Activated naive CD4-positive, alpha-beta T cell treated with anti-CD3 and anti-CD28 coated beads, Interleukin-2, amount 10 ng/mL, durations not matched to agents 7 days and 5 days (primary cell): ENCODE measurements at regions of chr1 and their contacts with region 1.

Region 1: GRCh38 chr1:31961536-31961935 is 23.4 kb upstream of the PTP4A2 start:
- DNase-seq: no peak
- H3K4me3 Mint-ChIP-seq: no peak overlapping the region
- H3K27ac Mint-ChIP-seq: peak overlapping the region; percentile 73
- H3K4me1 Mint-ChIP-seq: peaks cover 60% of the 10 kb centered on the region
- H3K27me3 Mint-ChIP-seq: peaks cover 7% of the 10 kb centered on the region

Region 2: GRCh38 chr1:31815752-31816500 is 145.6 kb before region 1 on chr1 and contains the start of gene SPOCD1:
- CTCF ChIA-PET with region 1: interaction called, 40 read pairs
- DNase-seq: peak; percentile 90
- H3K4me3 Mint-ChIP-seq: peak within 1 kb of the TSS; percentile 28
- H3K27ac Mint-ChIP-seq: peak within 1 kb of the TSS; percentile 49
- H3K4me1 Mint-ChIP-seq: peaks cover 14% of the 10 kb centered on the region
- H3K27me3 Mint-ChIP-seq: peaks cover 8% of the 10 kb centered on the region

Region 3: DNA sequence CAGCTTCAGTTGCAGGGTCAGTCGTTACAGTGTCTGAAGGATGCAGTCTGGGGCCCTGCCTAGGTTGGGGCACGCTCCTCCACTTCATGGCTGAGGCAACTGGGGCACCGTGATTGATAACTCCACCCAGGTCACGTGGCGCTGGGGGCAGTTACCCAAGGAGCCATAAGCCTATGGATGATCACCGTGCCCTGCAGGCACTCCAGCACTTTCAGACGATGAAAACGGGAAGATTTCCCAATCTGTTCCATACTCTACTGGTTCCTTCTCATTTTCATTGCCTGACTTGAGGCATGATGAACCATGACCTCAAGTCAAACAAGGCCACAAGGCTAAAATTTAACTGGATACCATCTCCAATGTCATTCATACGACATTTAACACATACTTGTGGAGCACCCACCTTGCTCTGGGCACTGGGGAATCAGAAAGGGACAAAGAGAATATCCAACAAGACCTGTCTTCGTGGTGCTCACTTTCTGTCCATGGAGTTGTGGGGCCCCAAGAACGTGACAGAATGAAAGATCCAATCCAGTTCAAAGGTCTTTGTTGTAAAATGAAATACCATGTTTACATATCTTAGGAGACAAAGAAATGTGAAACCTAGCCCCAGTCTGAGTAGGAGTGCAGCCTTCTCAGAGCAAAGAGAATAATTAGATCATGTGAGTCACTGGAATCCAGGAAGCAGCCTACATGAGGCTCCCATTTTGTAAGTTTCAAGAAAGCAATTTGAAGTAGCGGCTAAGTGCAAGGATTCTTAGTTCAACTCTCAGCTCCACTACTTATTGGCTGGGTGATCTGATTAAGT is 106.3 kb before region 1 on chr1:
- CTCF ChIA-PET with region 1: no interaction called
- DNase-seq: no peak
- H3K4me3 Mint-ChIP-seq: no peak overlapping the region
- H3K27ac Mint-ChIP-seq: no peak overlapping the region
- H3K4me1 Mint-ChIP-seq: peaks cover 6% of the 10 kb centered on the region
- H3K27me3 Mint-ChIP-seq: no peaks in the 10 kb centered on the region

Region 4: DNA sequence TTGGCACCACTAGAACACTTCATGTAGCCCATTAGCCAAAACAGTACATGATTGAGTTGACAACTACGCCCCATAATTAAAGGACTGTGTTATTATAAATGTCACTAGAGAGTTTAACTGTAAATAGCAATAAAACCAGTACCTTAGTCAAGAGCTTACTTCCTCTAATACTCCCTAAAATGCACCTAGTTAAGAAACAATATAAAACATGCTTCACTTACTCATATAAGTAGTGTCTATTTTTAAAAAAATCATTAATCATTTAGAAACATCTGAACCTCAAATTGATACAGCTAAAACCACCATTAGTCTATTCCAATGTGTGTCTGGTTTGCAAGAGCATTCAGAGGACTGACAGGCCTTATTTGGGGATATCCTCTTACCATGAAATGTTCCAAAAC is 48.7 kb before region 1 on chr1:
- CTCF ChIA-PET with region 1: interaction called, 22 read pairs
- DNase-seq: no peak
- H3K4me3 Mint-ChIP-seq: no peak overlapping the region
- H3K27ac Mint-ChIP-seq: no peak overlapping the region
- H3K4me1 Mint-ChIP-seq: peaks cover 52% of the 10 kb centered on the region
- H3K27me3 Mint-ChIP-seq: no peaks in the 10 kb centered on the region

Region 5: DNA sequence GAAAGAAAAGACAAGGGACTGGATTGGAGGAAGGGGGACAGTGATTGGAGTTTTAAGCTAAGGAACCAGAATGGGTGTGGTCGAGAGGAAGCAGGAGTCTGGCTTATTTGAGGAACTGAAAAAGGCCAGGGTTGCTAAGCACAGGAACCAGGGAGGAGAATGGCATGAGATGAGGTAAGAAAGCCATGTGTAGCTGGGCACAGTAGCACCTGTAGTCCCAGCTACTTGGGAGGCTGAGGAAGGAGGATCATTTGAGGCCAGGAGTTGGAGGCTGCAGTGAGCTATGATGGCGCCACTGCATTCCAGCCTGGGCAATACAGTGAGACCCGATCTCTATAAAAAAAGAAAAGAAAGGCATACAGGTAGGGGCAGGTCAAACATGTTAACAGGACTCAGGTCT is 44.0 kb after region 1 on chr1:
- CTCF ChIA-PET with region 1: interaction called, 34 read pairs
- DNase-seq: no peak
- H3K4me3 Mint-ChIP-seq: no peak overlapping the region
- H3K27ac Mint-ChIP-seq: no peak overlapping the region
- H3K4me1 Mint-ChIP-seq: peaks cover 13% of the 10 kb centered on the region
- H3K27me3 Mint-ChIP-seq: peaks cover 10% of the 10 kb centered on the region